ENCODE measurements at regions of chr21 and their contacts with region 1.

Region 1: DNA sequence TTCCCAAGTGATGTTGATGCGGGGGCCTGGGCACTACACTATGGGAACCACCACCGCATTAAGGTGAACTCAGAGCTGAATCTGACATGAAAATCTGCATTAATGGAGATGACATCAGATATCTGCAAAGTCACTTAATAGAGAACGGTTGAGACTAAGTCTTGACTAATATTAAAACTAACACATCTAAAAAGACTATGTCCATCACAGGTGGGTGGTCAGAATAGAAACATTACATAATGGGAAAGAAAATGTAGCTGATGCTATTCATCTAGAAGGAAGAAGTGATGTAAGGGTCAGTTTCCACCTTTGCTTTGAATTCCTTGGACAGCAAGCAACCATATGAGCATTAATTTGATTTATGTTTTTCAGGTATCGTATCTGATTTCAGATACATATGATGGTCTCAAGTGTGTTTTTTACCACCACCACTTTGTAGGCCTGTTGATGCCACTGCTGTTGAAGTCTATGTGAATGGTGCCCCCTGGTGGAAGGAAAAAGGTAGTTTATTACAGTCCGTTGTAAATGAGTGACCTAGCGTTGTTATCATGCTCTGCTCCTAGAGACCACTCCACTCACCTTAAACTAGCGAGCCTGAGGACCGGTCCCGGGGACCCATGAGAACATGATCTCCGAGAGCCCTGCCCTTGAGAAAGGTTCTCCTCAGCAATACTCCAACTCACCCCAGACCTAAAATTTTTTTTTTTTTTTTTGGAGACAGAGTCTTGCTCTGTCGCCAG is 73.5 kb downstream of the BACH1 start:
- DNase-seq: peak in 1 of 2 donors; percentile 45
- H3K4me3 ChIP-seq: no peak overlapping the region
- H3K27ac ChIP-seq: no peak overlapping the region
- H3K4me1 ChIP-seq: no peaks in the 10 kb centered on the region
- H3K27me3 ChIP-seq: no peaks in the 10 kb centered on the region
- CTCF ChIP-seq: peak; percentile 66 to 89

Region 2: DNA sequence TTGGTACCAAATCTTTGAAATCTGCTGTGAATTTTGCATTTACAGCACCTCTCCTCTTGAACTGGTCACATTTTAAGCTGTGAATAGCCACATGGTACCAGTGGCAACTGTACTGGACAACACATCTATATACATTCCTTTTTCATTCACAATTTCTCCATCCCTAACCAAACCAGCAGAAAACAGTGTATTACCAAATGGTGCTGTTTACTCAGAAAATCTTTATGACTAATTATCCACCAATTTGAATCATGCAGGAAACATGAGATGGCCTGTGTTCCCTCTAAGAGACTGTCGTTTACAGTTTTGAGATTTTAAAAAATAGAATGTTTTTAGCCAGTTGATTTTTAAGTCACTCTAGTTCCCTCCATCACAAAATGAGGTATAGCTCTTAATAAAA is 281.2 kb before region 1 on chr21:
- intact Hi-C with region 1: loop called (anchors 2 kb)
- DNase-seq: no peak
- H3K4me3 ChIP-seq: no peak overlapping the region
- H3K27ac ChIP-seq: peak overlapping the region; percentile 22 to 61
- H3K4me1 ChIP-seq: peaks cover 0 to 42% (median 13%) of the 10 kb centered on the region in 4 donors
- H3K27me3 ChIP-seq: no peaks in the 10 kb centered on the region
- CTCF ChIP-seq: no peak

Region 3: GRCh38 chr21:29164325-29164942 is 207.8 kb before region 1 on chr21:
- intact Hi-C with region 1: loop called (anchors 5 kb)
- DNase-seq: no peak
- H3K4me3 ChIP-seq: no peak overlapping the region
- H3K27ac ChIP-seq: peak overlapping the region; percentile 71 to 84
- H3K4me1 ChIP-seq: peaks cover 0 to 30% (median 12%) of the 10 kb centered on the region in 4 donors
- H3K27me3 ChIP-seq: no peaks in the 10 kb centered on the region
- CTCF ChIP-seq: peak; percentile 76 to 77

Region 4: GRCh38 chr21:29647353-29647781 is 275.1 kb after region 1 on chr21:
- intact Hi-C with region 1: no loop called
- DNase-seq: no peak
- H3K4me3 ChIP-seq: no peak overlapping the region
- H3K27ac ChIP-seq: no peak overlapping the region
- H3K4me1 ChIP-seq: no peaks in the 10 kb centered on the region
- H3K27me3 ChIP-seq: no peaks in the 10 kb centered on the region
- CTCF ChIP-seq: no peak